A673 (cell line): ENCODE measurements at regions of chr22 and their contacts with region 1.

Region 1: DNA sequence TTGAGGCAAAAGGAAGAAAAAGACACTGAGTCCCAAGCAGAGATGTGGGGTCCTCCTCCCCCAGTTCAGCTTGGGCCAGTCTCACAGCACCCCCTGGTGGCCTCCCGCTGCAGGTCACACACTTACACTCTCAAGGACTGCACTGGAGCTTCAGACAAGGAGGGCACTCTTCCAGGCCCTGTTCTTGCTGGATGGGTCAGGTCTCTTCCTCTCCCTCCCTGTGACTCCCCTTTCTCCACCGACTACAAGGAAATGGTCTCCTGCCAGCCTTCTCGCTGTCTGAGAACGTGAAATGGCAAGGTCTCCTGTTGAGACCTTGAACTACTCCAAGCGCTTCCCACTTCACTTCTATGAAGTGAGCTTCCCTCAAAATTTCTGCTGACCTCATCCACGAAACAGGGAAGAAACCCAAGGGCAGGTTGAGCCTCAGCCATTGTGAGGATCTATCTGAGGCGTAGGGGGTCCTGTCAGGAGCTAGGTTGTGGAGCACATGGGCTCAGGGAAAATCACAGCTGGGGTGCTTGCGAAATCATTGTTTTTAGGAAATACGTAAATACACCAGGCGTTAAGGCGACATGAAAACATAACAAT is 11.2 kb upstream of the IGLL1 start:
- DNase-seq: peak; percentile 76
- H3K4me3 ChIP-seq: no peak overlapping the region
- H3K27ac ChIP-seq: no peak overlapping the region
- H3K4me1 ChIP-seq: no peaks in the 10 kb centered on the region
- H3K27me3 ChIP-seq: no peaks in the 10 kb centered on the region
- CTCF ChIP-seq: peak; percentile 98

Region 2: GRCh38 chr22:23402275-23403151 is 188.8 kb before region 1 on chr22:
- CTCF ChIA-PET with region 1: no interaction called
- POLR2A ChIA-PET with region 1: no interaction called
- intact Hi-C with region 1: loop called (anchors 10 kb)
- DNase-seq: peak; percentile 73
- H3K4me3 ChIP-seq: peak overlapping the region; percentile 39
- H3K27ac ChIP-seq: no peak overlapping the region
- H3K4me1 ChIP-seq: no peaks in the 10 kb centered on the region
- H3K27me3 ChIP-seq: no peaks in the 10 kb centered on the region
- CTCF ChIP-seq: peak; percentile 61